Left ventricle myocardium inferior (tissue), 1 donor: ENCODE measurements at regions of chr4 and their contacts with region 1.

Region 1: GRCh38 chr4:10164877-10165283 is 48.3 kb upstream of the WDR1 start:
- DNase-seq: no peak
- H3K4me3 ChIP-seq: no peak overlapping the region
- H3K27ac ChIP-seq: no peak overlapping the region
- H3K4me1 ChIP-seq: peaks cover 32% of the 10 kb centered on the region
- H3K27me3 ChIP-seq: no peaks in the 10 kb centered on the region
- CTCF ChIP-seq: peak; percentile 70

Region 2: GRCh38 chr4:10403633-10404445 is 239.0 kb after region 1 on chr4:
- intact Hi-C with region 1: loop called (anchors 5 kb)
- DNase-seq: no peak
- H3K4me3 ChIP-seq: no peak overlapping the region
- H3K27ac ChIP-seq: no peak overlapping the region
- H3K4me1 ChIP-seq: peaks cover 9% of the 10 kb centered on the region
- H3K27me3 ChIP-seq: no peaks in the 10 kb centered on the region
- CTCF ChIP-seq: peak; percentile 63

Region 3: DNA sequence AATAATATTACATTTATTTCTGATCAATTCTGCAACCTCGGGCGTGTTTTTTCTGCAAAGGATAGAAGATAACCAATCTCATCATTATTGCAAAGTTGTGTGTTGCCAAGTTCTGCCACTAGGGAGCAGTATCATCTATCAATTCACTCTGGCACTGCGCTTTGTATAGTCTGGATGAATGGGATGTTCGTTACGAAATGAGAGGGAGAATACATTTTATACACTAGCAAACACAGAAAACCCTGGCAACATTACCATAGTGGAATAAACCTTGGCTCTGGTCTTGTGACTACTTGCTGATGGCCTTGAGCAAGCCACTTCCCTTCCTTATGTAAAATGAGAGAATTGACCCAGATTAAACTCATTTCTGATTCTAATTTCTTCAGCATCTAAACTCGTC is 389.8 kb after region 1 on chr4:
- intact Hi-C with region 1: loop called (anchors 5 kb)
- DNase-seq: no peak
- H3K4me3 ChIP-seq: no peak overlapping the region
- H3K27ac ChIP-seq: no peak overlapping the region
- H3K4me1 ChIP-seq: no peaks in the 10 kb centered on the region
- H3K27me3 ChIP-seq: peaks cover 46% of the 10 kb centered on the region
- CTCF ChIP-seq: peak; percentile 84